Mammary epithelial cell (primary cell): ENCODE measurements at regions of chr21 and their contacts with region 1.

Region 1: DNA sequence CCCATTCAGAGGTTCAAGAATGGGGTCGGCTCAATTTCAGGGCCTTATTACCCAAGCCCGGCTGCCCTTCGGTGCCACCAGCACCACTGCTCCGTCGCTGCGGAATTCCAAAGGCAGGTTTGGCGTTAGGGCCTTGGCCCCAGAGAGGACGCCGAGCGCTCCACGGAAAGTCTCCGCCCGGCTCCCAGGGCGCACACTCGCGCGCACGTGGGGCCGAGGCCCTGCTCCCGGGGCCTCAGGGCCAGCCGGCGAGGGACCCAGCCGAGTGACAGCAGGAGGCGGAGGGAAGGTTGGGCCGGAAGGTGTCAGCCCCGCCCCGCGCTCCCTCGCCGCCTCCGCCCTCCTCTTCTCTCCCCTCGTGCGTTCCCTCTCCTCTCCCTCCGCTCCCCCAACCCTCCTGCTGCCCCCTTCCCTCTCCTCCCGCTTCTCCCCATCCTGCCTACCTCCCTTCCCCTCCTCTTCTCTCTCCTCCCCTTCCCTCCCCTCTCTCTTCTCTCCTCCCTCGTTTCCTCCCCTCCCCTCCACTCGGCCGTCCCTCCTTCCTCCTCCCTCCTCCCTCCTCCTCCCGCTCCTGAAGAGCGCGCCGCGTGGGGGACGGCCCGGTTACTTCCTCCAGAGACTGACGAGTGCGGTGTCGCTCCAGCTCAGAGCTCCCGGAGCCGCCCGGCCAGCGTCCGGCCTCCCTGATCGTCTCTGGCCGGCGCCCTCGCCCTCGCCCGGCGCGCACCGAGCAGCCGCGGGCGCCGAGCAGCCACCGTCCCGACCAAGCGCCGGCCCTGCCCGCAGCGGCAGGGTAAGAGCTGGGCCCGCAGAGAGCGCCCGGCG is at the start of gene ETS2:
- DNase-seq: peak; percentile 92
- H3K4me3 ChIP-seq: peak within 1 kb of the TSS; percentile 88 to 93 (median 89)
- H3K27ac ChIP-seq: peak within 1 kb of the TSS; percentile 90
- H3K4me1 ChIP-seq: peaks cover 46% of the 10 kb centered on the region
- H3K27me3 ChIP-seq: no peaks in the 10 kb centered on the region
- CTCF ChIP-seq: no peak
- total RNA-seq, gene ETS2: 60.3 to 62.3 TPM

Region 2: GRCh38 chr21:38505654-38506515 is 299.7 kb before region 1 on chr21:
- CTCF ChIA-PET with region 1: no interaction called
- dilution Hi-C with region 1: no loop called
- in situ Hi-C with region 1: no loop called
- intact Hi-C with region 1: loop called (anchors 10 kb)
- DNase-seq: peak; percentile 76
- H3K4me3 ChIP-seq: no peak overlapping the region
- H3K27ac ChIP-seq: peak overlapping the region; percentile 5
- H3K4me1 ChIP-seq: peaks cover 20% of the 10 kb centered on the region
- H3K27me3 ChIP-seq: no peaks in the 10 kb centered on the region
- CTCF ChIP-seq: peak; percentile 73 to 78

Region 3: DNA sequence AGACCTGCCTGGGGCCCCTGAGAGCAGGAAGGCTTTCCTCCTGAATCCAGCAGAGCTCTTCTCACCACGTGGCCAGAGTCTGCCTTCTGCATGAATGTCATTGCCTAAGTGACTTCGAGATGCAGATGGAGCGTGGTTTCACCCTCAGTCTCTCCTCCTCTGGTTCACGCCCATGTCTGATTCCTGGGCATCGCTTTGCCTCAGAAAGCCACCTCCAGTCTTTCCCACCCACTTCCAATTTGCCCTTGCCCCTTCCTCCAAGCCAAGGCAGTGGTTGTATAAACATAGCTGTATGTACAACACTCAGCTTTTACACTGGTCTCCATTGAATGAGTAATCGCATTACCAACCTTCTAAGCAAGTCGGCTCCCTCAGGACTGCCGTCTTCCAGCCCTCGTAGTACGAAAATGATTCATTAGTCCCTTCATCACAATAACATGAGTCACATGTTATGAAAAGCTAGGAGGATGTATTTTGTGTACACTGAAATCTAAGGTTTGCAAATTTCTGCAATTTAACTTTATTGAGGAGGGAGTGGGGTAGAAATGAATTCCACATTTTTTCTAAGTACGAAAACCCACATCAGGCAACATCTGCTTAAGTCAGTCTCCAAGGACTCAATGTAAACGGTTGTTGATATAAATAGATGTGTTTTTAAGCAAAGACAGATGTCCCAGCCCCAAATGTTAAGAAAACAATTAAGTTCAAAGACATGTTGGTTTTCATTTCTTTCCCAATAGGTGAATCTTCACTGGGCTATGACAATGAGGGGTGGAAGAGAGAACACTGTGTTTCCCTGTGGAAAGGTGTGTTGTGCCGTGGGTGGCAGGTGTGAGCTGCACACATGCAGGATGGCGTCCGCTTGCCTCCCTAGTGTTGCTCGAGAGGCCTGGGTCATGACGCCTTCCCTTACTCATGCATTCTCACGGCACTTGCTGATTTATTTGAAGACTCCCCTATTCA is 32.2 kb before region 1 on chr21:
- CTCF ChIA-PET with region 1: no interaction called
- dilution Hi-C with region 1: no loop called
- in situ Hi-C with region 1: no loop called
- intact Hi-C with region 1: loop called (anchors 2 kb)
- DNase-seq: peak; percentile 92
- H3K4me3 ChIP-seq: no peak overlapping the region
- H3K27ac ChIP-seq: peak overlapping the region; percentile 61
- H3K4me1 ChIP-seq: peaks cover 17% of the 10 kb centered on the region
- H3K27me3 ChIP-seq: no peaks in the 10 kb centered on the region
- CTCF ChIP-seq: no peak

Region 4: DNA sequence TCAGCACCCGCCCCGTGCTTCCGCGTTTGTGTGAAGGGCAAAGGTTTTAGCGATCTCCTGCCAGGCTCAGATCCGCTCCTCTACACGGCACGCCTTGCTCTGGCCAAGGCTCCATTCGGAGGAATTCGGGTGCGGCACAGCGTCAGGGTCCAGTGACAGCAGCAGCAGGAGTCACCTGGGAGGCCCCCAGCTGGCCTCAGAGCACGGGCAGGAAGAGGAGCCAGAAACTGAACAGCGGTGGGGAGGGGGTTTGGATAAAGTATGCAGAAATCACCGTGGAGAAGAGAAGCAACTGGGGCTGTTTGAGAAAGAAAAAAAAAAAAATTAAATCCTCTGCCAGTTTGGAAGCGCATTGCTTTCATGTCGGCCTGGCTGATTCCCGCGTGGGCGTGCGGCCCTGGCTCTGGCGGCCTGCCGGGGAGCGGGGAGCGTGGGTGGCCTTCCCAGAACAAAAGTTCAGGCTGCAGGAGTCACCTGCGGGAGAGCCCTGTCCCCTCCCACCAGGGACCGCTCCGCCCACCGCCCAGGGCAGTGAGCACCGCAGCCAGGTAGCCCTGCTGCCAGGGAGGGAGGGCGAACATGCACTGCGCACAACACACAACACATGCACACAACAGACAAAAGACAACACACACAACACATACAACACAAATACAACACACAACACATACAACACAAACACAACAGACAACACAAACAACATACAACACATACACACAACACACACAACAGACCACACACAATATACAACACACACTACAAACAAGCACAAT is 107.8 kb after region 1 on chr21:
- CTCF ChIA-PET with region 1: no interaction called
- dilution Hi-C with region 1: no loop called
- in situ Hi-C with region 1: no loop called
- intact Hi-C with region 1: loop called (anchors 2 kb)
- DNase-seq: peak; percentile 87
- H3K4me3 ChIP-seq: no peak overlapping the region
- H3K27ac ChIP-seq: peak overlapping the region; percentile 71
- H3K4me1 ChIP-seq: peaks cover 49% of the 10 kb centered on the region
- H3K27me3 ChIP-seq: no peaks in the 10 kb centered on the region
- CTCF ChIP-seq: no peak

Region 5: DNA sequence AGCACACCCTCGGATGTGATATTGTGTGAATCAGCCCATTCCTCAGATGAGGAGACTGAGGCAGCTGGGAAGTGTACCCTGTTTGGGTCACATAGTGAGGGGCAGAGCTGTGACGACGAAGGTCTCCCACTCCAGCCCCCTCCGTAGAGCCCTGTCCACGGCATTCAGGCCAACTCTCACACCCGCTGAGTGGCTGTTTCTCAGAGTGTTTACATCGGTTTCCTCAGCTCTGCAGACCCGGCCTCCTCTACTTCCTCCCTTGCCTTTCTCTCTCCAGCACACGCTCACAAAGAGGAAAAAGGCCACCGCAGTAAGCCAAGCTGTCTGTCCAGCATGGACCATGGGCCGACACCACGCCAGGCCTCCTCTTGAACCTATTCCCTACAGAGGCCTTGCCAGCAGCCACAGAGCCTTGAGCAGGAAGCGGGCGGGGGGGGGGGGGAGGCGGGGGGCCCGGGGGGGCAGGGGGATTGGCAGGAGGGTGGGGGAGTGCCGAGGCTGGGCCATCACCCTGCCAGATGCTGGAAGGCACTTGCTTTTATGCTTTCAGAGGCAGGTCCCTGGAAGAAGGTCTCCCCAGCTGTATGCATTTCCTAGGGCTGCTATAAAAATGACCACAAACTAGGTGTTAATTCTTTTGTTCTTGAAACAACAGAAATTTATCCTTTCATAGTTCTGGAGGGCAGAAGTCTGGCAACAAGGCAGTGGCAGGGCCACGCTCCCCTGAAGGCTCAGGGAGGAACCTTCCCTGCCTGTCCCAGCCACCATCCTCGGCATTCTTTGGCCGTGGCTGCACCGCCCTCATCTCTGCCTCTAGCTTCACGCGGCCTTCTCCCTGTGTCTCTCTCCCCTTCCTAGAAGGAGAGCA is 199.3 kb after region 1 on chr21:
- CTCF ChIA-PET with region 1: no interaction called
- dilution Hi-C with region 1: no loop called
- in situ Hi-C with region 1: no loop called
- intact Hi-C with region 1: loop called (anchors 5 kb)
- DNase-seq: no peak
- H3K4me3 ChIP-seq: no peak overlapping the region
- H3K27ac ChIP-seq: no peak overlapping the region
- H3K4me1 ChIP-seq: peaks cover 10% of the 10 kb centered on the region
- H3K27me3 ChIP-seq: no peaks in the 10 kb centered on the region
- CTCF ChIP-seq: no peak

Region 6: DNA sequence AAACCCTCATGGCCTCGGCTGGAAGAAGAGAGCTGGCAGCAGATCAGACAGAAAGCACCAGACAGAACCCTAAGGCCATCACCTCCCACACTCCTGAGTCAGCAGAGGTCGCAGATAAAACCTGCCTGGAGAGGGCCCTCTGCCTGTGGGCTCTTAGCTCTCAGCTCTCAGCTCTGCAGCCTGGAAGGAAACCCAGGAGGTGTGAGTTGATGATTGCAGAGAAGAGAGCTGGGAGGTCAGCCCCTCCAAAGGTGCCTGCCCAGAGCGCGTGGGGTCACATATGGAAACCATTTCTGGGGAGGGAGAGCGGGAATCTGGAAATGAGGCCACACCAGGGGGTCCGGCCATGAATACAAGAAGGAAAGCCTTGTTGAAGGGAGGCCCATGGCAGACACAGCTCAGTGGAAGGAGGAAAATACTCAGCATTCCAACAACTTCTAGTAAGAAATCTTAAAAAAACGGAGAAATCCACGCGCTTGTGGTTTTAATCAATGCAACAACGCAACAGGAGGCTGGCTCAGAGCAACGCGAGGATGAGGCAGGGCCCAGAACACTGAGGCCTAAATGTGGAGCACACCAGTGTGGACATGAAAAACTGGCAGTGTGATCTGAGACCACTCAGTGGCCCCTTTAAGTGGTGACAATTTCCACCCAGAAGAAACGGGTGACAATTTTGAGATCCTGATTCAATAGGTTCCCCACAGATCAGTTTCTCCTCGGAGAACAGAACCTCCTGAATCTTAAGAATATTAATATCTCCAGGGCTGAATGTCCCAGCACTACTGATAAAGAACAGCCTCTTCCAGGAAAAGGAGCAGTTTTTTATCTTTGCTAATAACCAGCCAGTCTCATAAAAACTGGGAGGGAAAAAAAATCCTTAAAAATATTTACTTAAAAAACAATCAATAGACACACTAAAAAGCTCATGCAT is 332.0 kb after region 1 on chr21:
- CTCF ChIA-PET with region 1: no interaction called
- dilution Hi-C with region 1: loop called (anchors 10 kb)
- in situ Hi-C with region 1: loop called in 1 of 2 experiments (anchors 10 kb)
- intact Hi-C with region 1: no loop called
- DNase-seq: peak; percentile 51
- H3K4me3 ChIP-seq: no peak overlapping the region
- H3K27ac ChIP-seq: no peak overlapping the region
- H3K4me1 ChIP-seq: peaks cover 14% of the 10 kb centered on the region
- H3K27me3 ChIP-seq: no peaks in the 10 kb centered on the region
- CTCF ChIP-seq: peak; percentile 10 to 44